ENCODE measurements at regions of chr6 and their contacts with region 1.

Region 1: DNA sequence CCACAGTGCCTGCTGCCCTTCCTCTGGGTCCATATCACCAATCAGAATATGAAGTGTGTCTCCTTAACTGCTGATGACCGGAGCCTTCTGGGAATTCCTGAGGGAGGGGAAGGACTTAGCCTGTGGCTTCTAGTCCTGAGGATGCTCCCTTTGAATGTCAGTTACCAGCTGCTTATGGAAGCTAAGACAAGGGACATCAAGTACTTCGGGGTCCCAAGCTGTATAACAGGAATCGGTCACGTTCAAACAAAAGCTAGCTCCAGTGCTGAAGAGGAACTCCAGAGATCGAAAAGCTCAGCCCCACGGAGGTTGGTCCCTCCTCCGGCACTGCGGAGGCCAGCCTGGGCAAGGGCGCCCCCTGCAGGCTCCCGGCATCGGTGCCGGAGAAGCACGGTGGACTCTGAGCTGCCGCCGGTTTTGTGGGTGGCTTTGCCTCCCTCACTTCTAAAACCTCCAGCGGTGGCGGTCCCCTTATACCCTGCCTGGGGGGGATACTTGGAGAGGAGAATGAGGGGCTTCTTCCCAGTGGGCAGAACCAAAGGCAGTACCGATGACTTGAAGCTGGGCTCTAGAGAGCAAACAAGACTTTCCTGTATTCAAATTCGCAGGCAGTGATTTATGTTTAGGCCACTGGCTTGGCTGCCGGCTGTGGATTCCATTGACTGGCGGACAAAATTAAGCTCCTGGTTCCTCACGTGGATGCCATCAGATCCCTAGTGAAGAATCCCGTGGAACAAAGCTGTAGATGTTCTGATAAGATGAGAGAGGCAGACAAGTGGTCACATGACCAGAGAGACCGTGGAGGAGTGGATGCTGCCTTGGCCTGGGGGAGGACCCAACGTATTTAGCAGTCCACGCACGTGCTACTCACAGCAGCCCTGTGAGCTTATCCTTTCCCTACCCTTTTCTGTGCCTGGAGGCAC is 16.2 kb upstream of the UBR2 start:
- DNase-seq: peak in 1 of 2 donors; percentile 88
- H3K4me3 ChIP-seq: peak overlapping the region; percentile 53 to 67
- H3K27ac ChIP-seq: peak overlapping the region; percentile 23 to 66
- H3K4me1 ChIP-seq: no peaks in the 10 kb centered on the region
- H3K27me3 ChIP-seq: no peaks in the 10 kb centered on the region
- CTCF ChIP-seq: peak; percentile 94 to 99 (median 97)

Region 2: GRCh38 chr6:42217519-42218367 is 329.9 kb before region 1 on chr6 and contains the start of gene MRPS10:
- intact Hi-C with region 1: loop called (anchors 5 kb)
- DNase-seq: peak; percentile 66 to 96
- H3K4me3 ChIP-seq: peak within 1 kb of the TSS; percentile 59 to 80
- H3K27ac ChIP-seq: peak within 1 kb of the TSS; percentile 61 to 72
- H3K4me1 ChIP-seq: peaks cover 3 to 4% of the 10 kb centered on the region in 2 donors
- H3K27me3 ChIP-seq: no peaks in the 10 kb centered on the region
- CTCF ChIP-seq: no peak
- total RNA-seq, gene MRPS10: 5.4 TPM

Region 3: DNA sequence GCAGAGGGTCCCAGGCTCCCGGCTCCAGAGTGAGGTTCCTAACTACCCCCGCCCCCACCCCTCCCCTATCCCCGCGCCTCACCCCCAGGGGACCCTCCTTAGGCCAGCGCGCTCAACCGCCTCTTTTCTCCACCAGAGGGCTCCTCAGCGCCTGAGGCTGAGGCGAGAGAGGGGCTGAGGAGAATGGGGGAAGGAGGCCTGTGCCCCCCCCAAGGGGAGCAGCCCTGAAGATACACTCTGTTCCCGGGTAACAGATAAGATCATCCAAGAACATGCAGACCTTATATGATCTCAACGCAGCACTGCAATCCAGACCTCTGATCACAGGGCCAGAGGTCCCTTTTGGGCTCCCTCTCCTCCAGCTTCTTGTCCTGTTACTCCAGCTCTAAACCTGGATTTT is 286.7 kb before region 1 on chr6:
- intact Hi-C with region 1: loop called (anchors 5 kb)
- DNase-seq: no peak
- H3K4me3 ChIP-seq: no peak overlapping the region
- H3K27ac ChIP-seq: no peak overlapping the region
- H3K4me1 ChIP-seq: no peaks in the 10 kb centered on the region
- H3K27me3 ChIP-seq: no peaks in the 10 kb centered on the region
- CTCF ChIP-seq: peak in 2 of 3 experiments; percentile 44 to 56

Region 4: DNA sequence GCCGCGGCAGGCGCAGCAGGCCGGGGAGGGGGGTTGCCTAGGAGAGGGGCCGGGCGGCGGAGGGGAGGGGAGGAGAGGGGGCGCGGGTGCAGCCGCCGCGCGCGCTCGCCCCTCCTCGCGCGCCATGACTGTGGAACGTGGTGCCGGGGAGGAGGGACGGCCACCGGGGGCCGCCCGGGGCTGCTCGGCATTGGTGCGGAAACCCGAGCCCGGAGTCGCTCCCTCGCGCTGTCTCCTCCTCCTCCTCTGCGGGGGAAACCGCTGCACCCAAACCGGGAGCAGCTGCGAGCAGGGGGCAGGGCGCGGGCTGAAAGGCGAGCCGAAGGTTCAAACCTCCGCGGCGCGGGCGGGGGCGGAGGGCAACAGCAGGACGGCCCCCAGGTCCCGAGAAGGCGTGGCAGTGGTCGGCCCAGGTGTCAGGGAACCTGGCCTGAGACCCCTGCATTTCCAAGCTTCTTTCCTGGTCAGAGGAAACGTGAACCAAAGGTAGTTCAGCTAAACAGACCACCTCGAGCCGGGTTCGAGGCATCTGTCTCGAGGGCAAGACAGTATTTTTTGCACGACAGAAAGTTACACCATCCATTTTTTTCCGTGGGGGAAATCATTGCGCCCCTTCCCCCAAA is 94.5 kb before region 1 on chr6:
- intact Hi-C with region 1: loop called (anchors 5 kb)
- DNase-seq: peak in 1 of 2 donors; percentile 93
- H3K4me3 ChIP-seq: peak overlapping the region; percentile 89 to 98
- H3K27ac ChIP-seq: peak overlapping the region; percentile 82 to 84
- H3K4me1 ChIP-seq: peaks cover 0 to 3% of the 10 kb centered on the region in 2 donors
- H3K27me3 ChIP-seq: no peaks in the 10 kb centered on the region
- CTCF ChIP-seq: no peak

Region 5: GRCh38 chr6:42498473-42499128 is 49.1 kb before region 1 on chr6:
- intact Hi-C with region 1: no loop called
- DNase-seq: no peak
- H3K4me3 ChIP-seq: no peak overlapping the region
- H3K27ac ChIP-seq: no peak overlapping the region
- H3K4me1 ChIP-seq: no peaks in the 10 kb centered on the region
- H3K27me3 ChIP-seq: no peaks in the 10 kb centered on the region
- CTCF ChIP-seq: no peak

Region 6: DNA sequence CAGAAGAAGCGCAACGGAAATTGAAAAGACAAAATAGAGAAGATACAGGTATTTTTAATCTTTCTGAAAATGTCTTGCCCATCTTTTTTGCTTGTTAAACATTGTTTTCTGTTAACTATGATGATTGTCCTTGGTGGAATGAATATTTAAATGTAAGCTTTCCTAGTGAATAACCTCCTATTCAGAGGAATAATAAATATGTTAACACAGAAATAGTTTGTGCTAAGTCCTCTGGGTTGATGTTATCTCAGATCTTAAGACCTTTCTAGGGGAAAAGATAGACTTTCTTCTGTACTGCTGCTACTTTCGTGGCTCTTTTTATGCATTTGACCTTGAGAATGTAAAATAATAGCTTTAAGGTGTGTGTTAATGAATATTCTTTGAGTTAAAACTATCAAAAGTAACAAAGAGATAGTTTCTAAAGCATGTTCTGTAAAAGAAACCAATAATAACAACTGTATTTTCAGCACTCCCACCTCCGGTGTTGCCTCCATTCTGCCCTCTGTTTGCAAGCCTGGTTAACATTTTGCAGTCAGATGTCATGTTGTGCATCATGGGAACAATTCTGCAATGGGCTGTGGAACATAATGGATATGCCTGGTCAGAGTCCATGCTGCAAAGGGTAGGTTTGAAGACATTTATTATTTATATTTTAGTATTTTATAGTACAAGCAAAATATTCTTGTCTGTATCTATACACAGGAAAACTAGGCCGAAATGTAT is 104.5 kb after region 1 on chr6:
- intact Hi-C with region 1: no loop called
- DNase-seq: no peak
- H3K4me3 ChIP-seq: no peak overlapping the region
- H3K27ac ChIP-seq: no peak overlapping the region
- H3K4me1 ChIP-seq: no peaks in the 10 kb centered on the region
- H3K27me3 ChIP-seq: no peaks in the 10 kb centered on the region
- CTCF ChIP-seq: no peak

Measured in ascending aorta (tissue), 2 donors.